ENCODE measurements at regions of chr1 and their contacts with region 1.

Region 1: DNA sequence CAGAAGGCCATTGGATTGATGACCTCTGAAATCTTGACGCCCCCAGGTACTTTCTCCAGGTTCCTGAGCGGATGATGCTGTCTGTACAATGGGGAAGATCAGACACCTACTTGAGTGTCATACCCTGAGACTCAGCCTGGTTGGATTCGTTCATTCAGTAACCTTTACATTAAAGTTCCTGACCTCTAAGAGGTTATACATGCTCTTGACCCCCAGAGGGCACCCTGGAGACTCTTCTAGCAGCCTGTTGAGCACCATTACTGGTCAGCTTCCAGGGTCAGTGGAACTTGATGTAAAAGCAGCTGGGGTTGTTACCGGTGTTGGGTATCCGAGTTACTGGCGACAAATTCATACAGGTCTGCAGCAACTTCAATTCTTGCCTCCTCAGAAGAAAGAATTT is 114.3 kb upstream of the ZNF678 start:
- DNase-seq: no peak
- H3K4me3 ChIP-seq: no peak overlapping the region
- H3K27ac ChIP-seq: no peak overlapping the region
- H3K4me1 ChIP-seq: no peaks in the 10 kb centered on the region
- H3K27me3 ChIP-seq: peaks cover 0 to 33% (median 0%) of the 10 kb centered on the region in 7 donors
- CTCF ChIP-seq: peak in 4 of 11 experiments; percentile 8 to 41 (median 32)
- POLR2A ChIP-seq: no peak

Region 2: DNA sequence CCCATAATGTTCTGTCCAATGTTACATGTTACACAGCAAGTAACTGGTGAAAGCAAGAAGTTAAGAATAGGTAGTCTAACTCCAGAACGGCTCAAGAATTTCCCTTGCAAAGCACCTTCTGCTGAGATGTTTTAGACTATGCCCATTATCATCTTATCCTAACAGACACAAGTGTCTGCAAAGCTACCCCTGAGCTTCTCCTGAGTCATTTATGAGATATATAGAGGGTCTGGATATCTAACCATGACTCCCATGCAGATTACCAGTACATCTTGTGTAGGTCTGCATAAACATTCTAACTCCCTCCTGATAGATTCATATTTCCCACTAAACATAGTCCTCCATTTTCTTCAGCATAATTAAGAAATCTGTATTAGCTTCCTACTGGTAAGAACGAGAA is 337.3 kb before region 1 on chr1:
- intact Hi-C with region 1: loop called (anchors 10 kb)
- DNase-seq: no peak
- H3K4me3 ChIP-seq: no peak overlapping the region
- H3K27ac ChIP-seq: no peak overlapping the region
- H3K4me1 ChIP-seq: no peaks in the 10 kb centered on the region
- H3K27me3 ChIP-seq: no peaks in the 10 kb centered on the region
- CTCF ChIP-seq: no peak
- POLR2A ChIP-seq: no peak

Region 3: DNA sequence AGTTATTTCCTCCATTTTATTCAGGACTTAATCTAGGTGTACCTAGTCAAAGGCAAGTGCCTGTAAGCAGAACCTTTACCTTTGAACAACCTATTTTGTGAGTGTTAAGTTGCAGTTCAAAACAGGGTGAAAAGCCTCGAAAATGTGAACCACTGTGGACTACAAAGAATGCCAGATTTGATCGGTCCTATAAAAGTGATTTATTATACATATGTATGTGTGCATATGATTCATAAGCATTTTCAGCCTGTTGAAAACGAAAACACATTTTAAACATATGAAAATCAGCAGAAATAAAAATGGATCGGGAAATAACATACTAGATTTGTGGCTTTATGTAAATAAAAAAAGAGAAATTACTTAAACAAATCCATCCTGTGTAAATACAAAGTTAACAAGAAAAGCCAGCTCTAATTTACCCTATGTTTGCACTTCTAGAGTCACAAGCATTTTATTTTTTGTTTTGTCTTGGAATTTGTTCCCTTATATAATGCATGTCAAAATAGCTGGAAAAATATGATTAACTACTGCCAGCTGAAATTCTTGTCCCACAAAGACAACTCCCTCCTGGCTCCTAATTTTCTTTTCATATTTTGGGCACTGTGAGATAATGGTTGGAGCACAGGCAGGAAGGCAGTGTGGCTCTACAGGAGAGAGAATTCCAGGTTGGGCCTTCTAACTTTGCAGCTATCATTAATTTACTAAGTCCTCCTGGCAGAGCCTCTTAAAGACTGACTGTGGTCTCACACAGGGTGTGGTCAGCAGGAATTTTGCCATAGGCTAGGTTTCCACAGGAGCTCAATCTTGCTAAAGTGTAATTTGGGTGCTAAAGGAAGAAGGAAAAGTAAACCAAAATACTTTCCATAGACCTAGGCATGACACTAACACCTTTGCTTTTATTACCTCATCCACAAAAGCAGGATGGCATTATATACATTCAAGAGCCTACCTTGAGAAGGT is 60.6 kb before region 1 on chr1:
- intact Hi-C with region 1: no loop called
- DNase-seq: no peak
- H3K4me3 ChIP-seq: no peak overlapping the region
- H3K27ac ChIP-seq: no peak overlapping the region
- H3K4me1 ChIP-seq: no peaks in the 10 kb centered on the region
- H3K27me3 ChIP-seq: no peaks in the 10 kb centered on the region
- CTCF ChIP-seq: no peak
- POLR2A ChIP-seq: no peak

Region 4: DNA sequence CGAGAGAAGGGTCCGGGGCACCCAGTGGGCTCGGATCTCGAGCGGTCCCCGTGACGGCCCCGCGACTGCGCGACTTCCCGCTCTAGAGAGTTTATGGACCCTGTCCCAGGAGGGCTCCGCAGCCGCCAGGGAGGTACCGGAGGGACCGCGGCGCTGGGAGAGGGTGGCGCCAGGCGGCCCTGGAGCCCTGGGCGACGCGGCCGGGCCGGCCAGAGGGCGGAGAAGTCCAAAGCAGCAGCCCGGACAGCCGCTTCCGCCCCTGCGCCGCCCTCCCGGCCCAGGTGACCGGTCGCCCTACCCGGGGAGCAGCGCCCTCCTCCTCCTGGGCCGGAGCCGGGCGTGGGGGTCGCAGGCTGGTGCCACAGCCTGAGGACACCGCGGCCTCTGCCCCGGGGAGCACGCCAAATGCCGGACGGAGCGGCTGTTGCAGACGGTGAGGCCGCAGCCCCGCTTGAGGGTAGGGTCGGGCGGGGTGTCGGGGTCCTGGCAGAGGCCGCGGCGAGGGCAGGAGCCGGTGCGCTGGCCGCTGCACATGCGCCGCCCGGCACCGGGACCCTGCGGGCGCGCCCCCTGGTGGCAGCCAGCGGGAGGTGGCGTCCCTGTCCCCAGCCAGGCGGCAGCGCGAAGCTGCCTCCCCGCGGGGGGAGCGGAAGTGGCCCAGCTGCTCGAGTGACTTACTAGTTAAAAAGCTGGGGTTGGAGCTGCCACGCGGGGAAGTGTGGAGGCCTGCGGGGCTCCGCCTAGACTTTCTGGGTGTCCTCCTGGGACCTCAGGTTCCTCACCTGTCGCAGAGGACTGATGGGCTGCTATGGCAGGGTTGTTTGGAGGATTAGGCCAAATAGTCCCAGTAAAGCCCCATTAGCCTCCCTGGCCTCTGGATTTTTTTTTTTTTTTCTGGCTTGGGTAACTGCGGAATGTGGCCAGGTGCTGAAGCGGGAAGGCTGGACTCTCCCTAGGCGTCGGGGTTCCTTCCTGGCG is 93.4 kb after region 1 on chr1:
- intact Hi-C with region 1: no loop called
- DNase-seq: peak; percentile 98
- H3K4me3 ChIP-seq: peak overlapping the region; percentile 51 to 79 (median 66)
- H3K27ac ChIP-seq: peak overlapping the region in 4 of 8 donors; percentile 11 to 76 (median 66)
- H3K4me1 ChIP-seq: peaks cover 0 to 21% (median 16%) of the 10 kb centered on the region in 6 donors
- H3K27me3 ChIP-seq: peaks cover 0 to 8% (median 0%) of the 10 kb centered on the region in 7 donors
- CTCF ChIP-seq: peak; percentile 66 to 100 (median 99)
- POLR2A ChIP-seq: no peak